Endothelial cell of umbilical vein (primary cell): ENCODE measurements at regions of chr5 and their contacts with region 1.

Region 1: DNA sequence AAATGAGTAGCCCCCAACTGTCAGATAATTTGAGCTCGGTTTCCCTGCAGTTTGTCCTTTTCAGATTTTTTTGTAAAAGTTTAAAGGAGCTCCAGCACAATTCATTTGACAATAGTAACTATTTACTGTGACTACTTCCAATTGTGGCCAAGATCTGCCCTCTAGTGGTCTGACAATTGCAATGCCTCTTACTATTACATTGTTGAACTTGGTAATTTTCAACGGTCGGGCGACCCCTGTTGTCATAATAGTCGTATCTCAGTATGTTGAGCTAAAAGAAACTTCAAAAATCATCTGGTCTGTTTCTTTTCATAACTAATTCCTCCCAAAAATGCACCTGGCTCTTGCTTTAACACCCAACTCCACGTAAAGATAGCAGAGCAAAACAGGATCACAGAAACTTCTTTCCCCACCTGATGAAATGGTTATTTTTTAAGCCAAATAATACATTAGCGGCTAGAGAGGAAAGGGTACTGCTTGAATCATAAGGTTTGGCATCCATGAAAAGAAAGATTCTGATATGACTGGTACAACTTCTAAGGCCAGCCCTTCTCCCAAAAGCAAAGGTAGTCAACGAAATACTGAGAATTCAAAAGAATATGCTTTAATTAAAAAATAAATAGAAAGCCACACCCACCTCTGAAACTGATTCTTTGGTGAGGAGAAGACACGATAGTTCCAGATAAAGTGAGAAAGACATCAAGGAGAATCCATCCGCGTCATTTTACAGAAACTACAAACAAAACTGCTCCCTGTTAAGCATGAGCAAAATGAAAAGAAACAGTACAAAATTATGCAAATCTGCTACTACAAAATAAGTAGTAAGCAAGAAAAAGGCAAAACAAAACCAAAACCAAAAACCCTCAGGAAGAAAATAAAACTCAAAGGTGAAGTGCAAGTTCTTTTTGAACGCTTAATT is 76.9 kb upstream of the HTR4 start:
- DNase-seq: peak; percentile 89
- H3K4me3 ChIP-seq: no peak overlapping the region
- H3K27ac ChIP-seq: no peak overlapping the region
- H3K4me1 ChIP-seq: peaks cover 23% of the 10 kb centered on the region
- H3K27me3 ChIP-seq: no peaks in the 10 kb centered on the region
- CTCF ChIP-seq: peak; percentile 78 to 82
- POLR2A ChIP-seq: no peak

Region 2: GRCh38 chr5:147321569-147321968 is 1409.6 kb before region 1 on chr5:
- CTCF ChIA-PET with region 1: no interaction called
- POLR2A ChIA-PET with region 1: no interaction called
- dilution Hi-C with region 1: no loop called
- intact Hi-C with region 1: no loop called
- DNase-seq: no peak
- H3K4me3 ChIP-seq: no peak overlapping the region
- H3K27ac ChIP-seq: no peak overlapping the region
- H3K4me1 ChIP-seq: no peaks in the 10 kb centered on the region
- H3K27me3 ChIP-seq: peaks cover 4 to 5% of the 10 kb centered on the region in 2 experiments
- CTCF ChIP-seq: no peak
- POLR2A ChIP-seq: no peak

Region 3: GRCh38 chr5:147857302-147858129 is 873.7 kb before region 1 on chr5:
- CTCF ChIA-PET with region 1: interaction called, 42 read pairs
- POLR2A ChIA-PET with region 1: no interaction called
- dilution Hi-C with region 1: no loop called
- intact Hi-C with region 1: loop called (anchors 1 kb)
- DNase-seq: peak; percentile 76
- H3K4me3 ChIP-seq: no peak overlapping the region
- H3K27ac ChIP-seq: no peak overlapping the region
- H3K4me1 ChIP-seq: no peaks in the 10 kb centered on the region
- H3K27me3 ChIP-seq: no peaks in the 10 kb centered on the region
- CTCF ChIP-seq: peak; percentile 63 to 67
- POLR2A ChIP-seq: no peak

Region 4: GRCh38 chr5:148179234-148179824 is 551.9 kb before region 1 on chr5:
- CTCF ChIA-PET with region 1: interaction called, 105 read pairs
- POLR2A ChIA-PET with region 1: no interaction called
- dilution Hi-C with region 1: no loop called
- intact Hi-C with region 1: loop called (anchors 1 kb)
- DNase-seq: peak; percentile 78
- H3K4me3 ChIP-seq: no peak overlapping the region
- H3K27ac ChIP-seq: no peak overlapping the region
- H3K4me1 ChIP-seq: no peaks in the 10 kb centered on the region
- H3K27me3 ChIP-seq: no peaks in the 10 kb centered on the region
- CTCF ChIP-seq: peak; percentile 53 to 56
- POLR2A ChIP-seq: no peak

Region 5: DNA sequence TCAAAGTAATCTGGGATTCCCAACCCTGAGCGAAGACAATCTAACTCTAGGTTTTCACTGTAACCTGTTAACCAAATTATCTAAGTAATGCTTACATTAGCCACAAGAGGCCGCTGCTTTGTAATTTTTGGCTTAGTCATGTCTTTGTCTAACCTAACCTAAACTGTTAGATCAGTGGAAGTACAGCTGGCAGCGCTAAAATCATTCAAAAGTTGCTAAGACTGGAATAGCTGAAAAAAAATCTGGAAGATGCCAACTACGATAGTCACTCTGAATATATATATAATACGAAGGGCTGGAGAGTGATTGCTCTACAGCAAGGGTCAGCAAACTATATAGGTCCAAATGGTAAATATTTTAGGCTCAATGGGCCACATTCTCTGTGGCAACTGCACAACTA is 287.2 kb before region 1 on chr5:
- CTCF ChIA-PET with region 1: interaction called, 388 read pairs
- POLR2A ChIA-PET with region 1: interaction called, 3 read pairs
- dilution Hi-C with region 1: no loop called
- intact Hi-C with region 1: loop called (anchors 1 kb)
- DNase-seq: peak; percentile 79
- H3K4me3 ChIP-seq: no peak overlapping the region
- H3K27ac ChIP-seq: no peak overlapping the region
- H3K4me1 ChIP-seq: no peaks in the 10 kb centered on the region
- H3K27me3 ChIP-seq: no peaks in the 10 kb centered on the region
- CTCF ChIP-seq: peak; percentile 48 to 50
- POLR2A ChIP-seq: no peak

Region 6: DNA sequence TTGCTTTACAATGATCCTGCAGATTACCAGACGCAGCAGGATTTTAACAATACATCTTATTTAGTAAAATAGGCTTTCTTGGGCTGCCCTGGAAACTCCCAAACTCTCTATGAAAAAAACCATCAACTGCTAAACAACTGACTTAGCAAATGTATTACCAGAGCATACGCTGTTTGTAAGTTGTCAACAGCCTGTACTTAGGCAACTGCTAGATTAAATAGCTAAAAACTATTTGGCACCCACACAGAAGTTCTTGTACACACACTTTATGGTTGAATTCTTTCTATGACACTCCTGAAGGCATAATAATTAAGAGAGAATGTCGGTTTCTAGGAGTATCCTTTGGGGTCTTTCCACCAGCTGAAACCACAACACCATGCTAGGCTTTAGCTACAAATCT is 223.6 kb before region 1 on chr5:
- CTCF ChIA-PET with region 1: no interaction called
- POLR2A ChIA-PET with region 1: no interaction called
- dilution Hi-C with region 1: no loop called
- intact Hi-C with region 1: no loop called
- DNase-seq: no peak
- H3K4me3 ChIP-seq: no peak overlapping the region
- H3K27ac ChIP-seq: no peak overlapping the region
- H3K4me1 ChIP-seq: no peaks in the 10 kb centered on the region
- H3K27me3 ChIP-seq: peaks cover 2% of the 10 kb centered on the region in 2 experiments
- CTCF ChIP-seq: no peak
- POLR2A ChIP-seq: no peak

Region 7: GRCh38 chr5:148687427-148687826 is 43.8 kb before region 1 on chr5:
- CTCF ChIA-PET with region 1: interaction called, 22 read pairs
- POLR2A ChIA-PET with region 1: no interaction called
- dilution Hi-C with region 1: no loop called
- intact Hi-C with region 1: no loop called
- DNase-seq: peak; percentile 58
- H3K4me3 ChIP-seq: no peak overlapping the region
- H3K27ac ChIP-seq: no peak overlapping the region
- H3K4me1 ChIP-seq: no peaks in the 10 kb centered on the region
- H3K27me3 ChIP-seq: peaks cover 0 to 4% of the 10 kb centered on the region in 2 experiments
- CTCF ChIP-seq: peak; percentile 52 to 66
- POLR2A ChIP-seq: no peak

Region 8: GRCh38 chr5:148998174-148998797 is 267.1 kb after region 1 on chr5:
- CTCF ChIA-PET with region 1: interaction called, 167 read pairs
- POLR2A ChIA-PET with region 1: no interaction called
- dilution Hi-C with region 1: no loop called
- intact Hi-C with region 1: loop called (anchors 1 kb)
- DNase-seq: peak; percentile 68
- H3K4me3 ChIP-seq: no peak overlapping the region
- H3K27ac ChIP-seq: no peak overlapping the region
- H3K4me1 ChIP-seq: peaks cover 13% of the 10 kb centered on the region
- H3K27me3 ChIP-seq: no peaks in the 10 kb centered on the region
- CTCF ChIP-seq: peak; percentile 54 to 62
- POLR2A ChIP-seq: no peak

Region 9: DNA sequence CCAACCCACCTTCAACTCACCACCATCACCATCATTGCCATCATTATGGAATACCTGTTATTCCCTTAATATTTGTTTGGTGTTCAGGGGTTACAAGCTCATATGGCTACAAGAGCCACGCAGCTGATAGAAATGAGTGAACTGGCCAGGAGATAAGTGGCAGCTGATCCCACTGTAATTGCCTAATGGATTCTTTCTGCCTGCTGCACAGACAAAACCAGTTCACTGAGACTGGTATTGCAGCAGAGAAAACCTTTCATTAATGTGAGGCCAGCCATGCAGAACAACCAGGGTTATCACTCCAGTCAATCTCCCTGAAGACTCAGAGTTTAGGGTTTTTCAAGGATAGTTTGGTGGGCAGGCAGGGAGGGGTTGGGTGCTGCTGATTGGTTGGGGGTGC is 335.8 kb after region 1 on chr5:
- CTCF ChIA-PET with region 1: no interaction called
- POLR2A ChIA-PET with region 1: no interaction called
- dilution Hi-C with region 1: no loop called
- intact Hi-C with region 1: no loop called
- DNase-seq: no peak
- H3K4me3 ChIP-seq: no peak overlapping the region
- H3K27ac ChIP-seq: no peak overlapping the region
- H3K4me1 ChIP-seq: peaks cover 20% of the 10 kb centered on the region
- H3K27me3 ChIP-seq: no peaks in the 10 kb centered on the region
- CTCF ChIP-seq: no peak
- POLR2A ChIP-seq: no peak

Region 10: GRCh38 chr5:149228618-149229297 is 497.6 kb after region 1 on chr5:
- CTCF ChIA-PET with region 1: interaction called, 5 read pairs
- POLR2A ChIA-PET with region 1: no interaction called
- dilution Hi-C with region 1: no loop called
- intact Hi-C with region 1: loop called (anchors 2 kb)
- DNase-seq: peak; percentile 84
- H3K4me3 ChIP-seq: no peak overlapping the region
- H3K27ac ChIP-seq: peak overlapping the region; percentile 42
- H3K4me1 ChIP-seq: peaks cover 30% of the 10 kb centered on the region
- H3K27me3 ChIP-seq: no peaks in the 10 kb centered on the region
- CTCF ChIP-seq: peak; percentile 64 to 73
- POLR2A ChIP-seq: no peak